H1 (cell line): ENCODE measurements at regions of chr11 and their contacts with region 1.

Region 1: DNA sequence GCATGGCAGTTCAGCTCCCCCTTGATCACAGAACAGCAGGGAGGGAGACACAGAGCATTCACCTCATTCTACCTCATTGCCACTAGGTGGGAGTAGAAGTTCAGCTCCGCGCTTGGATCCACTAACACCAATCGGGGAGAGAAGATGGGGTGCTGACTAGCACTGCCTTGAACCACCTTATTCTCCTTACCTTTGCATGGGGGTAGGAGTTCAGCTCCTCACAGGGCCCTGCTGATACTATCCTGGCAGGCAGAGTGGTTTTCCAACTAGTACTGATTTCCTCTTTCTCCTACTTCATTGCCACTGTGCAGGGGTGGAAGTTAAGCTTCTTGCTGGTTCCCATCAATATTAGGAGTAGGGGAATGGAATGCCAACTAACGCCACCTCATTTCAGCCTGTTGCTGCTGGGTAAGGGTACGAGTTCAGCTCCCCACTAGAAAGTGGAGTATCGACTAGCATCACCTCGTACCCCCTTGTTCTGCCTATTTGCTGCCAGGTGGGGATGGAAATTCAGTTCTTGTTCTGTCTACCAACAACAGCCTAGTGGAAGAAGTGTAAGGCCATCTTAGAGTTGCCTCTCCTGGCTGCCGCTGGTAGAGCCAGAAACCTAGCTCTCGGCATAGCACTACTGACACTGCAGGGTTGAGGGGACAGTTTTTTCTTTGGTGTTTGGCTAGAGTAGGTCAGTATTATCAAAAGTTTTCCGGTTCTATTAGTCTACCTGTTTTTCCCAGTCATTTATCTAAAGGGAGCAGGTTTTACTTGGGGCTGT is 550.9 kb upstream of the CCDC90B start:
- DNase-seq: peak; percentile 17 to 61
- H3K4me3 ChIP-seq: no peak overlapping the region
- H3K27ac ChIP-seq: no peak overlapping the region
- H3K4me1 ChIP-seq: peaks cover 0 to 3% (median under 1%) of the 10 kb centered on the region in 4 experiments; a peak in 2 of 7 replicates
- H3K27me3 ChIP-seq: no peaks in the 10 kb centered on the region
- CTCF ChIP-seq: peak; percentile 75 to 92 (median 86)
- EP300 ChIP-seq: no peak
- POLR2A ChIP-seq: no peak
- RAD21 ChIP-seq: peak; percentile 97

Region 2: GRCh38 chr11:83691451-83691950 is 145.6 kb before region 1 on chr11:
- CTCF ChIA-PET with region 1: no interaction called
- POLR2A ChIA-PET with region 1: no interaction called
- DNase-seq: no peak
- H3K4me3 ChIP-seq: no peak overlapping the region
- H3K27ac ChIP-seq: no peak overlapping the region
- H3K4me1 ChIP-seq: peaks cover 0 to 5% (median 1%) of the 10 kb centered on the region in 4 experiments; a peak in 1 of 7 replicates
- H3K27me3 ChIP-seq: no peaks in the 10 kb centered on the region
- CTCF ChIP-seq: no peak
- EP300 ChIP-seq: no peak
- POLR2A ChIP-seq: no peak
- RAD21 ChIP-seq: no peak

Region 3: GRCh38 chr11:83713701-83714100 is 123.4 kb before region 1 on chr11:
- CTCF ChIA-PET with region 1: no interaction called
- POLR2A ChIA-PET with region 1: no interaction called
- DNase-seq: no peak
- H3K4me3 ChIP-seq: no peak overlapping the region
- H3K27ac ChIP-seq: no peak overlapping the region
- H3K4me1 ChIP-seq: peaks cover 0 to 5% (median 0%) of the 10 kb centered on the region in 4 experiments; a peak in 1 of 7 replicates
- H3K27me3 ChIP-seq: no peaks in the 10 kb centered on the region
- CTCF ChIP-seq: no peak
- EP300 ChIP-seq: no peak
- POLR2A ChIP-seq: no peak
- RAD21 ChIP-seq: no peak

Region 4: DNA sequence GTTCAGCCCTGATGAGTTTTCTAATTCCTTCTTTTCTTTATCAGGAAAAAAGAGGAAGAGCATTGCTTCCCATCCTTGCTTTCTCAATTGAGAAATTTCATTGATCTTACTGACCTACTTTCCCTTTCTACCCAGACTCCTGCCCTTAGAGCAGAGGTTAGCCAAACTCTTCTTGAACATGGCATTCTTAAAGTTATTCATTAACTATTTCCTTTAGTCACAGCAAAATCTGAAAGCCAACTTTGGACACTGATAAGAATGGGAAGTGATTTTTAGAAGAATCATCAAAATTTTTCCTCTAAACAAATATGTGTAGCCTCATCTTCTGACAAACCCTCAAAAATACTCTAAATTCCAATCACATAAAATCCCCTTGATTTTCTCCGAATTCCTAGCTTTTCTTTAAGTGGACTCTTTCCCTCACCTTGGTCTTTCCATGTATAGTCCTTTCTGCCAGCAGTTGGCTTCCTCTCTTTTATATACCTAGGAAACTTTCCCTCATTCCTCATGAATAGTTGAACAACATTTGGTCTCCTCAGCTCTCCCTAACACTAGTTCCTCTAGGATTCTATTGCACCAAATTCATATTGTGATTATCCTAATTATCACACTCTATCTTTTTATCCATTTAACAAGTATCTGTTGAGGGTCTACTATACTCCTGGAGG is 15.8 kb after region 1 on chr11:
- CTCF ChIA-PET with region 1: interaction called, 11 read pairs
- POLR2A ChIA-PET with region 1: no interaction called
- DNase-seq: no peak
- H3K4me3 ChIP-seq: no peak overlapping the region
- H3K27ac ChIP-seq: no peak overlapping the region
- H3K4me1 ChIP-seq: no peaks in the 10 kb centered on the region
- H3K27me3 ChIP-seq: no peaks in the 10 kb centered on the region
- CTCF ChIP-seq: no peak
- EP300 ChIP-seq: no peak
- POLR2A ChIP-seq: no peak
- RAD21 ChIP-seq: no peak

Region 5: DNA sequence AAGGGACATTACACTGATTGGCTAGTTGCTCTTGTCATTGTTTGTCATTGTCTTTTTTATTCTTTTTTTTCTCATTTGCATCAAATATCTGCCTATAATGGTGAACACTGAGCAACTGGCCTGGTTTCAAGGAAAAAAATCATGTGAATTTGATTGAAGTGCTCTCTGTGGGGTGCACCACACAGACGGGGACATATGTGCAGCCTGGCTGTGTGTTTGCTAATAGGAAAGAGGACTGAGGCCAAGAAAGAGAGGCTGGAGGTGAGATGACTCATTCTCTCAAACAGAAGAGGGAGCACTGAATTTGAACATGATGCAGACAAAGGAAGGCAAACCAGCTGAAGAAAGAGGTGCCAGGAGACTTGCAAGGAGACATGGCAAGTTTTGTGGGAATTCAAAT is 134.0 kb after region 1 on chr11:
- CTCF ChIA-PET with region 1: interaction called, 10 read pairs
- POLR2A ChIA-PET with region 1: no interaction called
- DNase-seq: no peak
- H3K4me3 ChIP-seq: no peak overlapping the region
- H3K27ac ChIP-seq: no peak overlapping the region
- H3K4me1 ChIP-seq: no peaks in the 10 kb centered on the region
- H3K27me3 ChIP-seq: no peaks in the 10 kb centered on the region
- CTCF ChIP-seq: no peak
- EP300 ChIP-seq: no peak
- POLR2A ChIP-seq: no peak
- RAD21 ChIP-seq: no peak

Region 6: DNA sequence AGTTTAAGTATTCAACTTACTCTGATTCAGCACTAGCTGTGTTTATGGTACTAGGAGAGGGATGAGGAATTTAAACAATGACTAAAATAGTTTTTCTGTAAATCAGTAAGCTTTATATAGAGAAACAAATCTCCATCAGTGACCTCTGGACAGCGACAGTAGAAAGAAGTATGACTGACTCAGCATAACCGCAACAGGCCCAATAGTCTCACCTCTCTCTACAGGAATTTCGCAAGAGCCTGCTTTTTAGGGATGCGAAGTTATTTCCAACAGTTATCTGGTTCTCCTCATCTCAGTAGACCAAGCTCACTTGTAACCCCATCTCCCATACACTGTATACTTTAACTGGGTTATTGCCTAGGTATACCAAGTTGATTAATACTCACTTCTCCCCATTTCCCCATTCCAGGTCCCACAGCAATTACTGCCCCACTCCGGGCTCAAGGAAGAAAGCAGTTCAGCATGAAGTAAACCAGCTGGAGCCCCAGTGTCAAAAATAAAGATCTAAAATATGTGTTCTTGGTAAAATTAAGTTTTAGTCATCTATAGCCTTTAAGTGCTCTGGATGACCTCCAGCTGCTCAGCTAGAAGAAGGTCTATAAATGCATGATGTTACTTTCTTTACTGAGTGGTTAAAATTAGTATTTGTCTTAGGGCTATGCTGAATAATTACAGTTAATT is 219.8 kb after region 1 on chr11:
- CTCF ChIA-PET with region 1: interaction called, 16 read pairs
- POLR2A ChIA-PET with region 1: no interaction called
- DNase-seq: no peak
- H3K4me3 ChIP-seq: no peak overlapping the region
- H3K27ac ChIP-seq: no peak overlapping the region
- H3K4me1 ChIP-seq: no peaks in the 10 kb centered on the region
- H3K27me3 ChIP-seq: no peaks in the 10 kb centered on the region
- CTCF ChIP-seq: no peak
- EP300 ChIP-seq: no peak
- POLR2A ChIP-seq: no peak
- RAD21 ChIP-seq: no peak

Region 7: GRCh38 chr11:84146826-84147225 is 309.8 kb after region 1 on chr11:
- CTCF ChIA-PET with region 1: interaction called, 19 read pairs
- POLR2A ChIA-PET with region 1: no interaction called
- DNase-seq: no peak
- H3K4me3 ChIP-seq: no peak overlapping the region
- H3K27ac ChIP-seq: no peak overlapping the region
- H3K4me1 ChIP-seq: no peaks in the 10 kb centered on the region
- H3K27me3 ChIP-seq: no peaks in the 10 kb centered on the region
- CTCF ChIP-seq: peak in 2 of 3 experiments; percentile 26 to 32; a peak in 3 of 4 replicates
- EP300 ChIP-seq: no peak
- POLR2A ChIP-seq: no peak
- RAD21 ChIP-seq: peak; percentile 30 to 36; a peak in 2 of 4 replicates

Region 8: GRCh38 chr11:84261707-84262106 is 424.6 kb after region 1 on chr11:
- CTCF ChIA-PET with region 1: interaction called, 112 read pairs
- POLR2A ChIA-PET with region 1: interaction called, 4 read pairs
- DNase-seq: peak; percentile 13 to 46
- H3K4me3 ChIP-seq: no peak overlapping the region
- H3K27ac ChIP-seq: no peak overlapping the region
- H3K4me1 ChIP-seq: no peaks in the 10 kb centered on the region
- H3K27me3 ChIP-seq: no peaks in the 10 kb centered on the region
- CTCF ChIP-seq: peak; percentile 37 to 67 (median 56)
- EP300 ChIP-seq: no peak
- POLR2A ChIP-seq: no peak
- RAD21 ChIP-seq: peak; percentile 79